ENCODE measurements at regions of chr20 and their contacts with region 1.

Region 1: GRCh38 chr20:46562373-46563169 is 12.1 kb upstream of the OCSTAMP start:
- DNase-seq: no peak
- ATAC-seq: peak; percentile 82

Region 2: GRCh38 chr20:46400253-46400652 is 162.3 kb before region 1 on chr20:
- intact Hi-C with region 1: no loop called
- DNase-seq: no peak
- ATAC-seq: peak; percentile 90

Region 3: DNA sequence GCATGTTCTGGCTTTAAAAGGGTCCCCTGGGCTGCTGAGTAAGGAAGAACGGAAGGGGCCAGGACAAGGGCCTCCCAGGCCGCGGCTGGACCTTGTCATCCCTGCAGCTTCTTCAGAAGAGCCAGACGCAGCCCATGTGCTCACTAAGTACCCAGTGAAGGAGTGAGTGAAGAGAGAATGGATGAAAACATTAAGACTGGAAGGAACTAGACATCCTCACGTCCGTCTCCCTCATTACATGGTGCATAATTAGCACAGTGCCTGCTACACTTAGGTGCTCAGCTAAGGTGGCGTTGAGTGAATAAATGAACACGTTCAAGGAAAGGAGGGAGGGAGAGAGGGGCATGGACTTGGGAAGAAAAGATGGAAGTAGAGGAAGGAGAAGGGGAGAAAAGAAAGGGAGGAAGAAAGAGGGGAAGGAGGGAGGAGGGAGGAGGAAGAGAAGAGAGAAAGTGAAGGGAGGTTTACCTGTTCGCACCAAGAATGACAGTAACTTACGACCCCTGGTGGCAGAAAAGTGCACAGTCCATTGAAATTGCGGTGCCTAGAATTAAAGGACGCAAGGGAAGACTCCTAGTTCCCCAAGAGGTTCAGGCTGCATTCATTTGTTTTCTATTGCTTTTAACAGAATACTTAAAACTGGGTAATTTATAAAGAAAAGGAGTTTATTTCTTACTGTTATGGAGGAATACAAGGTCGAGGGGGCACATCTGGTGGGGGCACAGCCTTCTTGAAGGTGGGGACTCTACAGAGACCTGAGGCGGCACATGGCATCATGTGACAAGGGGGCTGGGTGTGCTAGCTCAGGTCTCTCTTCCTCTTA is 118.7 kb after region 1 on chr20:
- intact Hi-C with region 1: loop called (anchors 5 kb)
- DNase-seq: no peak
- ATAC-seq: no peak

Measured in Right ventricle myocardium inferior (tissue), 1 donor.